Ascending aorta (tissue), 2 donors: ENCODE measurements at regions of chr22 and their contacts with region 1.

Region 1: DNA sequence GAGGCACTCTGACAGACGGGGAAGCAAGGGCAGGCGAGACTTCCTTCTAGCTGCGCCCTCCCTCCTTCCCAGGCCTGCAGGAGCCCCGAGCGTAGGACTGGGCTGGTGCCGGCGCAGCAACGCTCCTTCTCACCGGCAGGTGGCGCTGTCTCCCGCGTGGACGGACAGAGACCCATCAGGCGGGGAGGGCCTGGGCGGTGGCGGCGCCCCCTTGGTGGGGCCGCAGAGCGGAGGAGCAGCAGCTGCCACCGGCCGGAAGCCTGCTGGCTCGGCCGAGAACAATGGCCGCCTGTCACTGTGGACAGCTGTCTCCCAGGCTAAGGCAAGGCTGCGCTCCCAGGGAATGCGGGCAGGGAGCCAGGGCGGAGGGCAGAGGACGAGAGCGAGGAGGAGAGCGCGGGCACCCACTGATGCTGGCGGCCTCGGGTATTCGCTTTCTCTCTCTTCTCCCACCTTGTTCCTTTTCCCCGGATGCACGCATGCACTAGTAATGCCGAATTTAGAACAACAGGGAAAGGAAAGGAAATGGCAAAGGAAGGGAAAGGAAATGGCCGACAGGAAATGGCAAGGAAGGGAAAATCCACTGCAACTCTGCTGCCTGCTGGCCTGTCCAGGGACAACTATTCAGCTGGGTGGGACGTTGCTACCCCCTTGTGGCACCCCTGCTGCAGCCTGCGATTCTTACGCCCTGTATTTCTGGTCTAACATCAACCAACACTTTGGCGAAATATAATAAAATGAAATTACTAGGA is 14.4 kb downstream of the PPM1F start:
- DNase-seq: peak; percentile 68 to 96
- H3K4me3 ChIP-seq: peak overlapping the region; percentile 54 to 76
- H3K27ac ChIP-seq: peak overlapping the region; percentile 94 to 99
- H3K4me1 ChIP-seq: peaks cover 13 to 37% of the 10 kb centered on the region in 2 donors
- H3K27me3 ChIP-seq: no peaks in the 10 kb centered on the region
- CTCF ChIP-seq: peak; percentile 97 to 99 (median 99)

Region 2: DNA sequence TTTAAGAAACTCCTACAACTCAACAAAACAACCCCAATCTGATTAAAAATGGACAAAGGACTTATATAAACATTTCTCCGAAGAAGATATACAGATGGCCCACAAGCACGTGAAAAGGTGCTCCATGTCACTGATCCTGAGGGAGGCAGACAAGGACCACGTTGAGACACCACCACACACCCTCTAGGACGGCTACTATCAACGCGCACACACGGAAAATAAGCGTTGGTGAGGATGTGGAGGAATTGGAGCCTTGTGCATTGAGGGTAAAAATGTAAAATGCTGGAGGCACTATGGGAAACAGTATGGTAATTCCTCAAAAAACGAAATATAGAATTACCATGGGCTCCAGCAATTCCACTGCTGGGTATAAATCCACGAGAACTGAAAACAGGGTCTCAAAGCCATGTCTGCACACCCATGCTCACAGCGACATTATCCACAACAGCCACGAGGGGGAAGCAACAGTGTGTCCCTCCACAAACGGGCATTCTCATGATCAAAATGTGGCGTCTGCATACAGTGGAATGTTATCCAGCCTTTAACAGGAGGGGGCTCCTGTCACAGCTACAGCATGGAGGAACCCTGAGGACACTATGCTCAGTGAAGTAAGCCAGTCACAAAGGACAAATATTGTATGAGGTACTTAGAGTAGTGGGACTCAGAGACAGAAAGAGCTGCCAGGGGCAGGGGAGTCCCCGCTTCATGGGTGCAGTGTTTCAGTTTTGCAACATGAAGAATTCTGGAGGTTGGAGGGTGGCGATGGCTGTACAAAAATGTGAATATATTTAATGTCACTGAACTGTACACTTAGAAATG is 225.1 kb before region 1 on chr22:
- intact Hi-C with region 1: loop called (anchors 1 kb)
- DNase-seq: peak in 1 of 2 donors; percentile 82
- H3K4me3 ChIP-seq: peak overlapping the region; percentile 23 to 38
- H3K27ac ChIP-seq: peak overlapping the region in 1 of 2 donors; percentile 19
- H3K4me1 ChIP-seq: no peaks in the 10 kb centered on the region
- H3K27me3 ChIP-seq: no peaks in the 10 kb centered on the region
- CTCF ChIP-seq: peak; percentile 73 to 76 (median 74)

Region 3: GRCh38 chr22:21735200-21736076 is 202.8 kb before region 1 on chr22 and contains the start of gene YPEL1:
- intact Hi-C with region 1: loop called (anchors 1 kb)
- DNase-seq: peak; percentile 91 to 98
- H3K4me3 ChIP-seq: peak within 1 kb of the TSS; percentile 69 to 78
- H3K27ac ChIP-seq: peak within 1 kb of the TSS; percentile 58 to 72
- H3K4me1 ChIP-seq: peaks cover 0 to 7% of the 10 kb centered on the region in 2 donors
- H3K27me3 ChIP-seq: no peaks in the 10 kb centered on the region
- CTCF ChIP-seq: peak in 1 of 3 experiments; percentile 8
- total RNA-seq, gene YPEL1: 1.1 TPM

Region 4: DNA sequence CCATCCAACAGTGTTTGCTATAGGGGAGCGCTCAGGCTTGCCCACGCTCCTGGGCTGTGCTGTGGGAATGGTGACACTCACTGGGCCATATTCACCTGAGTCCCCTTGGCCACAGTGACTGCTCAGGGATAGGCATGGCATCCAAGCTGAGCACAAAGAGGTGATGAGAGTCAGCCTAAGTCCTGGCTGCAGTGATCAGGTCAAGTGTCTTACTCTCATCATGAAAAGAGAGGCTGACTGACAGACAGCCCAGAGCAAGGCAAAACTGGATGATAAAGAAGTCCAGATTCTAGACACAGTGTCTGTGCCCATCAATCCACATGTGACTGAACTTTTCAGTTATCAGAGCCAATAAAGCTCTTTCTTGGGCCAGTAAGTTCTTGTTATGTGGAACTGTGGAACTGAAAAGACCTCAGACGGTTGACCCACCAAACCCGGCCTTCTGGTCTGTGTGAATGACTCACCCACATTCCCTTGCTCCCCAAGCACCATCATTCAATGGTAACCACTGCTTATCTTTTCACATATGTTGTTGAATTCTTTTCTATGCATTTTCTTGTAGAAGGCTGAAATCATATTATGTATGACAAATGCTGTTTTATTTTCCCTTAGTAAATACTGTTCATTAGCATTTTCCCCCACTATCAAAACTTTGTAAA is 159.4 kb before region 1 on chr22:
- intact Hi-C with region 1: loop called (anchors 10 kb)
- DNase-seq: no peak
- H3K4me3 ChIP-seq: no peak overlapping the region
- H3K27ac ChIP-seq: no peak overlapping the region
- H3K4me1 ChIP-seq: peaks cover 0 to 2% of the 10 kb centered on the region in 2 donors
- H3K27me3 ChIP-seq: no peaks in the 10 kb centered on the region
- CTCF ChIP-seq: no peak

Region 5: GRCh38 chr22:21867528-21868266 is 70.5 kb before region 1 on chr22 and contains the start of gene MAPK1:
- intact Hi-C with region 1: loop called (anchors 1 kb)
- DNase-seq: peak; percentile 71 to 96
- H3K4me3 ChIP-seq: peak within 1 kb of the TSS; percentile 89 to 93
- H3K27ac ChIP-seq: peak within 1 kb of the TSS; percentile 87 to 91
- H3K4me1 ChIP-seq: peaks cover 3 to 21% of the 10 kb centered on the region in 2 donors
- H3K27me3 ChIP-seq: no peaks in the 10 kb centered on the region
- CTCF ChIP-seq: peak in 2 of 3 experiments; percentile 41 to 43
- total RNA-seq, gene MAPK1: 43.3 TPM

Region 6: GRCh38 chr22:21952586-21953571 is 14.6 kb after region 1 on chr22 and contains the start of gene PPM1F:
- intact Hi-C with region 1: loop called (anchors 2 kb)
- DNase-seq: peak; percentile 47 to 92
- H3K4me3 ChIP-seq: peak within 1 kb of the TSS; percentile 77 to 83
- H3K27ac ChIP-seq: peak within 1 kb of the TSS; percentile 37 to 66
- H3K4me1 ChIP-seq: peaks cover 0 to 8% of the 10 kb centered on the region in 2 donors
- H3K27me3 ChIP-seq: no peaks in the 10 kb centered on the region
- CTCF ChIP-seq: peak; percentile 64 to 97 (median 76)
- total RNA-seq, gene PPM1F: 76.0 TPM